H1 (cell line): ENCODE measurements at regions of chr20 and their contacts with region 1.

Region 1: DNA sequence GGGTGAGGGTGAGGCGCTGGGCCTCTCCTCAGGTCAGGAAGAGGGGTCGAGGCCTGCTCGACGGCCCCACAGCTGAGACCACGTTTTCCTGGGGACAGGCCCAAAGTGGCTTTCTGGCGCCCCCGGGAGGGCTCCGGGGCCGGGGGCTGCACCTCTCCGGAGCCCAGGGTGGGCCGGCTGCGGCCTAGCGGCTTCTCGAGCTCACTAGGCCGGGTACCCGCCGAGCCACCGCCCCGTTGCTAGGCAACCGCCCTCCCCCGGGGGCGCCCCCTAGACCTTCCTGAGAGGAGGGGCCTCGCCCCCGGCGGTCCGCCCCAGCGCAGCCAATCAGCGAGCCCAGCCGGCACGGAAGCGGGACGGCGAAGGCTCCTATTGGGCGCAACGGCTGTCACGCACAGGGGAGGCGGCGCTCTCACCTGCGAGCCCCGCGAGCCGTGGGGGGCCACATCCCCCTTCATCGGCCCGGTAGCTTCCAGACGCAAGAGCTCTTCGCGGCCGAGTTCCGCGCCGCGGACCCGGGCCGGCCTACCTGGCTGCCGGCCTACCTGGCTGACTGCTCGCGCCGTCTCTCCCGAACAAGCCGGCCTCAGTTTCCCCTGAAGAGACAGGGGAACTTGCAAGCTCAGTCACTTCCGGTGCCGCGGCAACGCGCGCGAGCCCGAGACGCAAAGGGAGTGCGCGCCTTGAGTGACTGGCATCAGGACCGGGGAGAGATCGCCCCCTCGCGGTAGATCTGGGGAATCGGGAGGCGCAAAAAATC is 831 bp upstream of the BCL2L1 start:
- DNase-seq: peak; percentile 96 to 99
- H3K4me3 ChIP-seq: peak overlapping the region; percentile 48 to 94 (median 70)
- H3K27ac ChIP-seq: peak overlapping the region; percentile 95
- H3K4me1 ChIP-seq: peaks cover 15 to 37% (median 33%) of the 10 kb centered on the region in 4 experiments
- H3K27me3 ChIP-seq: no peaks in the 10 kb centered on the region
- CTCF ChIP-seq: peak; percentile 97 to 99 (median 98)
- EP300 ChIP-seq: no peak
- POLR2A ChIP-seq: peak in 1 of 2 experiments; percentile 89; a peak in 2 of 3 replicates
- RAD21 ChIP-seq: peak; percentile 98 to 99

Region 2: GRCh38 chr20:31630187-31630790 is 93.2 kb before region 1 on chr20:
- CTCF ChIA-PET with region 1: interaction called, 95 read pairs
- POLR2A ChIA-PET with region 1: interaction called, 7 read pairs
- DNase-seq: no peak
- H3K4me3 ChIP-seq: no peak overlapping the region
- H3K27ac ChIP-seq: no peak overlapping the region
- H3K4me1 ChIP-seq: no peaks in the 10 kb centered on the region; a peak in 2 of 7 replicates
- H3K27me3 ChIP-seq: no peaks in the 10 kb centered on the region
- CTCF ChIP-seq: no peak
- EP300 ChIP-seq: no peak
- POLR2A ChIP-seq: no peak
- RAD21 ChIP-seq: no peak

Region 3: GRCh38 chr20:31652917-31653396 is 70.5 kb before region 1 on chr20:
- CTCF ChIA-PET with region 1: interaction called, 14 read pairs
- POLR2A ChIA-PET with region 1: no interaction called
- DNase-seq: no peak
- H3K4me3 ChIP-seq: no peak overlapping the region
- H3K27ac ChIP-seq: no peak overlapping the region
- H3K4me1 ChIP-seq: no peaks in the 10 kb centered on the region
- H3K27me3 ChIP-seq: no peaks in the 10 kb centered on the region
- CTCF ChIP-seq: no peak
- EP300 ChIP-seq: no peak
- POLR2A ChIP-seq: no peak
- RAD21 ChIP-seq: no peak

Region 4: DNA sequence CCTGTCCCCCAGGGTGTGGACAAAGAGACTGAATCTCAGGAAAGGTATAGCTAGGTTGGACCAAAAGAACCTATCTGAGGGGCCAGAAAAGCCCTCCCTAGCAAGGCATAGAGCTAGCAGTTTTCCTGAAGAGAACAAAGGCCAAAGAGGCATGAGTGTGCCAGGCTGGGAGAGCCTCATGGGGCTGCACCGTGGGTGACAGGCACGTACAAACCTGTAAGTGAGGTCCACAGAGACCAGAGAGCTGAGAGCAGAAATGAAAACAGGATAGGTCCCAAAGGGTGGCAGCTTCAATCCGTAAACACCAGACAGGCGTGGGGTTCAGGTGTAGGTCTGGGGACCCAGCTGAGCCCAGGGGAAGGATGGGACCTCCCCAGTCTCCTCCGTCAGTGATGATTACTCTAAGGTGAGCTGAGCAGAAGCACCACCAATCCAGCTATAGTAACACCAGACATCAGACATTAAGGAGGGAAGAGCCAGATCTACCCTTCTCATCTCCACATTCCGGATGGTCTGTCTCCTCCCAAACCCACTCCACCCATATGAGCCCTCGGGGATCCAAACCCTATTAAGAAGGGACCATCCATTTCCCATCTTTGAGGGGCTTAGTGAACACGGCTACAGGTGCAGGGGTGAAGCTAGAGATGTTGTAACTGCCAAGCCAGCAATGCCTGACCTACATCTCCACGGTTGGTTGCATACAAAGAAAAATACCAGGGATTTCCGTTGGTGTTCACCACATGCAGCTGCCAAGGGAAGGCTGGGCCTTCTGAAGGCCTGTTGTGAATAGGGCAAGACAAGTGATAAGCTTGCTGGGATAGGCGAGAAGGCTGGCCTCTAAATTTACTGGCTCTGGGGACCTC is 39.1 kb before region 1 on chr20:
- CTCF ChIA-PET with region 1: interaction called, 42 read pairs
- POLR2A ChIA-PET with region 1: interaction called, 7 read pairs
- DNase-seq: no peak
- H3K4me3 ChIP-seq: no peak overlapping the region
- H3K27ac ChIP-seq: no peak overlapping the region
- H3K4me1 ChIP-seq: peaks cover 0 to 3% (median 1%) of the 10 kb centered on the region in 4 experiments; a peak in 1 of 7 replicates
- H3K27me3 ChIP-seq: no peaks in the 10 kb centered on the region
- CTCF ChIP-seq: no peak
- EP300 ChIP-seq: no peak
- POLR2A ChIP-seq: no peak
- RAD21 ChIP-seq: no peak

Region 5: GRCh38 chr20:31704225-31705119 is 19.0 kb before region 1 on chr20:
- CTCF ChIA-PET with region 1: interaction called, 28 read pairs
- POLR2A ChIA-PET with region 1: interaction called, 85 read pairs
- DNase-seq: no peak
- H3K4me3 ChIP-seq: no peak overlapping the region
- H3K27ac ChIP-seq: peak overlapping the region; percentile 32; the same call in 1 of the 2 replicates
- H3K4me1 ChIP-seq: peaks cover 6 to 17% (median 14%) of the 10 kb centered on the region in 4 experiments
- H3K27me3 ChIP-seq: no peaks in the 10 kb centered on the region
- CTCF ChIP-seq: no peak
- EP300 ChIP-seq: no peak
- POLR2A ChIP-seq: no peak
- RAD21 ChIP-seq: no peak

Region 6: GRCh38 chr20:31751126-31751525 is 27.6 kb after region 1 on chr20:
- CTCF ChIA-PET with region 1: interaction called, 14 read pairs
- POLR2A ChIA-PET with region 1: no interaction called
- DNase-seq: no peak
- H3K4me3 ChIP-seq: no peak overlapping the region
- H3K27ac ChIP-seq: no peak overlapping the region
- H3K4me1 ChIP-seq: peaks cover 0 to 2% (median 0%) of the 10 kb centered on the region in 4 experiments; a peak in 1 of 7 replicates
- H3K27me3 ChIP-seq: no peaks in the 10 kb centered on the region
- CTCF ChIP-seq: no peak
- EP300 ChIP-seq: no peak
- POLR2A ChIP-seq: no peak
- RAD21 ChIP-seq: no peak

Region 7: GRCh38 chr20:31767805-31768204 is 44.3 kb after region 1 on chr20:
- CTCF ChIA-PET with region 1: no interaction called
- POLR2A ChIA-PET with region 1: no interaction called
- DNase-seq: no peak
- H3K4me3 ChIP-seq: no peak overlapping the region
- H3K27ac ChIP-seq: no peak overlapping the region
- H3K4me1 ChIP-seq: no peaks in the 10 kb centered on the region; a peak in 1 of 7 replicates
- H3K27me3 ChIP-seq: no peaks in the 10 kb centered on the region
- CTCF ChIP-seq: no peak
- EP300 ChIP-seq: no peak
- POLR2A ChIP-seq: no peak
- RAD21 ChIP-seq: no peak